ENCODE measurements at regions of chr7 and their contacts with region 1.

Region 1: GRCh38 chr7:151876899-151877777 is at the start of gene PRKAG2:
- DNase-seq: peak; percentile 93
- H3K4me3 ChIP-seq: peak within 1 kb of the TSS; percentile 77 to 99 (median 91)
- H3K27ac ChIP-seq: peak within 1 kb of the TSS; percentile 75 to 93 (median 86)
- H3K4me1 ChIP-seq: peaks cover 5 to 43% (median 21%) of the 10 kb centered on the region in 6 donors
- H3K27me3 ChIP-seq: peaks cover 0 to 20% (median 0%) of the 10 kb centered on the region in 7 donors
- CTCF ChIP-seq: peak in 4 of 11 experiments; percentile 12 to 31 (median 16)
- POLR2A ChIP-seq: peak in 1 of 3 donors; percentile 3
- total RNA-seq, gene PRKAG2: 25.6 to 50.9 (median 41.3) TPM

Region 2: GRCh38 chr7:151631968-151632749 is 245.0 kb before region 1 on chr7:
- intact Hi-C with region 1: loop called (anchors 10 kb)
- DNase-seq: peak; percentile 98
- H3K4me3 ChIP-seq: peak overlapping the region; percentile 53 to 88 (median 66)
- H3K27ac ChIP-seq: peak overlapping the region; percentile 89 to 98 (median 96)
- H3K4me1 ChIP-seq: peaks cover 13 to 44% (median 27%) of the 10 kb centered on the region in 6 donors
- H3K27me3 ChIP-seq: no peaks in the 10 kb centered on the region
- CTCF ChIP-seq: peak in 6 of 11 experiments; percentile 8 to 65 (median 50)
- POLR2A ChIP-seq: no peak

Region 3: DNA sequence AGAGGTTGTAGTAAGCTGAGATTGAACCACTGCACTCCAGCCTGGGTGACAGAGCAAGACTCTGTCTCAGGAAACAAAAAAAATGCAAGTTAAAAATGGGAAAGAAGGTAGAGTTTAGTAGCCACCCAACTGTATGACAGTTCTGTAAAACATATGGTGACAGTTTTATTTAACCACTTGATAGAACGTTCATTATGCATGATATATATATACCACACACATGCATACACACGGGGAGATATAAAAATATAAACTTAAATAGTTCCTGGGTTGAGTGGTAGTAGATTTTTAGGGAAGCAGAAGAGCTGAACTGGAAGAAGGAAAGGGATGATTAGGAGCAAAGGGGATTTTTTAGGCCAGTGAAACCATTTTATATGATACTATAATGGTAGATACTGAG is 438.7 kb after region 1 on chr7:
- intact Hi-C with region 1: no loop called
- DNase-seq: no peak
- H3K4me3 ChIP-seq: no peak overlapping the region
- H3K27ac ChIP-seq: no peak overlapping the region
- H3K4me1 ChIP-seq: peaks cover 10 to 68% (median 25%) of the 10 kb centered on the region in 6 donors
- H3K27me3 ChIP-seq: no peaks in the 10 kb centered on the region
- CTCF ChIP-seq: no peak
- POLR2A ChIP-seq: no peak